H1 (cell line): ENCODE measurements at regions of chr3 and their contacts with region 1.

Region 1: GRCh38 chr3:22091329-22091728 is 340.3 kb upstream of the ZNF385D start:
- DNase-seq: no peak
- H3K4me3 ChIP-seq: no peak overlapping the region
- H3K27ac ChIP-seq: no peak overlapping the region
- H3K4me1 ChIP-seq: no peaks in the 10 kb centered on the region
- H3K27me3 ChIP-seq: no peaks in the 10 kb centered on the region
- CTCF ChIP-seq: no peak
- EP300 ChIP-seq: no peak
- POLR2A ChIP-seq: no peak
- RAD21 ChIP-seq: no peak

Region 2: DNA sequence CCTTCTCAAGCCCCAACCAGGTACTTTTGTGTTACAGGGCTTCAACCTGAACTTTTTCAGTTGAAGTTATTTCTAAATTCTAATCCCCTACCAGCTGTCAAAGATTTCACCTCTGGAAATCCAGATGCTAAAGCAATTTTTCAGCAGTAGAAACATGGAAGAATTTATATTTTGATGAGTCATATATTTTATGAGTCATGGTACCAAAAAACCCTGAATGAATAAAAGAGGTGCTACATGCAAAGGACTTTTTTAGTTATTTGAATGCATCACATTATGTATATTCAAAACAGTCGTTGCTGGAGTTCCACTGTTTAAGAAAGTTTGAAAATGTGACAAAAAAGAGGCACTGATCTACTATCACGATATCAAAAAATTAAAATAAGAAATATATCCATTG is 244.3 kb before region 1 on chr3:
- CTCF ChIA-PET with region 1: no interaction called
- POLR2A ChIA-PET with region 1: no interaction called
- DNase-seq: no peak
- H3K4me3 ChIP-seq: no peak overlapping the region
- H3K27ac ChIP-seq: no peak overlapping the region
- H3K4me1 ChIP-seq: no peaks in the 10 kb centered on the region
- H3K27me3 ChIP-seq: no peaks in the 10 kb centered on the region
- CTCF ChIP-seq: no peak
- EP300 ChIP-seq: no peak
- POLR2A ChIP-seq: no peak
- RAD21 ChIP-seq: no peak

Region 3: DNA sequence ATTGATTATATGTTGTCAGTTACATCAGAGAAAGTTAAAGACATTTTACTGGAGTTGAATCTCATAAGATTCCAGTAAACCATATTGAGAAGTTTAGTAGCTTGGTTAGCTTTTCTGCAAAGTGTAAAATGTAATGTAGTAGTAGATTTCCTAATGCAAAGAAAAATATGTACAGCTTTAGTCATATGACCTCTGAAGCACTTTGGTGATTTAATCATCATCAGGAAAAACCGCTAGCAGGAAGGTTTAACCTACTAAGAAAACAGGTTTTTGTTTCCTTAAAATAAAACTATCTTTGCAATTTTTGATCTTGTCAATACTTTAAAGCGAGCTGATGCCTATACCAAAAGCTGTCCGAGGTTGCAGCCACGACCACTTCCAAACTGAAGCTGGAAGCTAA is 24.3 kb after region 1 on chr3:
- CTCF ChIA-PET with region 1: interaction called, 14 read pairs
- POLR2A ChIA-PET with region 1: no interaction called
- DNase-seq: no peak
- H3K4me3 ChIP-seq: no peak overlapping the region
- H3K27ac ChIP-seq: no peak overlapping the region
- H3K4me1 ChIP-seq: no peaks in the 10 kb centered on the region
- H3K27me3 ChIP-seq: no peaks in the 10 kb centered on the region
- CTCF ChIP-seq: no peak
- EP300 ChIP-seq: no peak
- POLR2A ChIP-seq: no peak
- RAD21 ChIP-seq: no peak